HepG2 (cell line): ENCODE measurements at regions of chr6 and their contacts with region 1.

Region 1: DNA sequence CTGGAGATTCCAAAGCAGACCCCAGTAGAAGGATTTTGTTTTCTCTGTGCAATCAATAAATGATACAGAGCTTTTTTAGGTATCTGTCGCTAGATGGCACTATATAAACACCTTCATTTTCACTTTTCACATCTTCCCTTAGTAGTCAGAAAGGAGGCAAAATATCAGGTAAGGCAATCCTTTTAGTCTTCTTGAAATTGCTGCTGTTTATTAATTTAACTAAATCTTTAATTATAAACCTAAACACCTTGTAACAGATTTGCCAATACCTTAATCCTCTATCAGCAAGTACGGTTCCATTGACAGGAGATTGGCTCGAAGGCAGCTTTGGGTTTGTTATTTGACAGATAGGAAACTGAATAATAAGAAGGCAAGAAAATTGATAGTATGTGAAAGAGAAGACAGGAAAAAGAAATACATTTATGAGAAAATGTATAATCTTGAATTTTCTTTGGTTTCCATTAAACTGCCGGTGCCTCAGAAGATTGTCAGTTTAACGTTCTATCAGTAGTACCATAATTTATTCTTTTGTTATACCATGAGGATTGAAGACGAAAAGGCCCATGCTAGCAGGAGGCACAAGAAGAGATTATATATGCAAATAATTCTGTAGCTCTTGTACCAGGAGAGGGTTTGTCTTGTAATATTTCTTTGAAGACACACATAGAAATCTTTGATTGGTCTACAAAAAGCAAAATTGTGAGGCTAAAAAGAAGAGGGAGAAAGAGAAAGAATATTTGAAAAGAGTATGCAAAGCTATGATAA is 23.5 kb upstream of the IBTK start:
- DNase-seq: peak; percentile 30
- ATAC-seq: no peak; the same call in 2 of the 3 replicates
- H3K4me3 ChIP-seq: no peak overlapping the region
- H3K27ac ChIP-seq: no peak overlapping the region
- H3K4me1 ChIP-seq: no peaks in the 10 kb centered on the region
- H3K27me3 ChIP-seq: peaks cover 0 to 6% of the 10 kb centered on the region in 2 experiments; a peak in 1 of 5 replicates
- CTCF ChIP-seq: peak; percentile 62
- EP300 ChIP-seq: no peak
- POLR2A ChIP-seq: no peak
- RAD21 ChIP-seq: no peak

Region 2: GRCh38 chr6:82113231-82113630 is 157.8 kb before region 1 on chr6:
- CTCF ChIA-PET with region 1: no interaction called
- POLR2A ChIA-PET with region 1: no interaction called
- in situ Hi-C with region 1: no loop called
- intact Hi-C with region 1: no loop called
- DNase-seq: no peak
- ATAC-seq: no peak
- H3K4me3 ChIP-seq: no peak overlapping the region
- H3K27ac ChIP-seq: no peak overlapping the region
- H3K4me1 ChIP-seq: peaks cover 30% of the 10 kb centered on the region
- H3K27me3 ChIP-seq: no peaks in the 10 kb centered on the region
- CTCF ChIP-seq: no peak
- EP300 ChIP-seq: no peak
- POLR2A ChIP-seq: no peak
- RAD21 ChIP-seq: no peak

Region 3: DNA sequence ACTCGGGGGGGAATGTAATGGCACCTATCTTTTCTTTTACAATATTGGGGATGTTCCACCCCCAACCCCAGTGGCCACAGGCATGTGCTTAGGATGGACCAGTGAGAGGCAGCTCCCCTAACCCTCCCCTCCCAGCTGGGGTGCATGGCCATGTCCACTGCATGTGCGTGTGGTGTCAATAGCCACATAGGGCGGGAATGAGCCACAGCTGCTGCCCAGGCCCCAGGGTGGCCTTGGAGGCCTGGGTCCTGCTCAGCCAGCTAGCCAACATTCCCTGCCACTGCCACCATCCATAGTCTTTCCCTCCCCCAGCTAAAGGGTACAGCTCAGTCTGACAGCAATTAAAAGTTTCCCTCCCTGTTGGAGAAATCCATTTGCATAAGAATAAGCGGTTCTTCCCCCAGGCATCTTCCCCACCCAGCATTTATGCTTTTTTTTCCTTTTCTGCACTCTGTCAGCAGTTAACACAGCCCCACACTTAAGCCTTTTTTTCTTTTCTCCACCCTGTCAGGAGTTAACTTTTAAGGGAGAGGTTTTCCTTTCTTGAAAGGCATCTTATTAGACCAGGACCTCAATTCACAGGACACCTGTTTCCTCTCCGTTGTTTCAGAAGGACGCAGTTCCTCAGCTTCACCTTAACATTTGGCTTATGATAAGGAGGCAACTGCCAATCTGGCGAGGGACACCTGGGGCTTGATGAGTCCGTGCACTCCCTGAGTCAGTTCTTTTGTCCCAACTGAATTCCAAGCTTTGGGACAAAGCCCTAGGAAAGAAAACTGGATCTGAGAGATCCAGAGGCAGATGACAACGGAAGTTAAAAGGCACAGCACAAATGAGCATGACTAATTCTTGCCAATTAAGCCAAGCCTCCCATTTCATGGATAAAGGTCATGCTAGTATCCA is 213.9 kb after region 1 on chr6:
- CTCF ChIA-PET with region 1: interaction called, 3 read pairs
- POLR2A ChIA-PET with region 1: no interaction called
- in situ Hi-C with region 1: loop called (anchors 10 kb)
- intact Hi-C with region 1: loop called (anchors 2 kb)
- DNase-seq: no peak
- ATAC-seq: no peak
- H3K4me3 ChIP-seq: no peak overlapping the region
- H3K27ac ChIP-seq: no peak overlapping the region
- H3K4me1 ChIP-seq: no peaks in the 10 kb centered on the region
- H3K27me3 ChIP-seq: no peaks in the 10 kb centered on the region
- CTCF ChIP-seq: no peak
- EP300 ChIP-seq: no peak
- POLR2A ChIP-seq: no peak
- RAD21 ChIP-seq: no peak

Region 4: DNA sequence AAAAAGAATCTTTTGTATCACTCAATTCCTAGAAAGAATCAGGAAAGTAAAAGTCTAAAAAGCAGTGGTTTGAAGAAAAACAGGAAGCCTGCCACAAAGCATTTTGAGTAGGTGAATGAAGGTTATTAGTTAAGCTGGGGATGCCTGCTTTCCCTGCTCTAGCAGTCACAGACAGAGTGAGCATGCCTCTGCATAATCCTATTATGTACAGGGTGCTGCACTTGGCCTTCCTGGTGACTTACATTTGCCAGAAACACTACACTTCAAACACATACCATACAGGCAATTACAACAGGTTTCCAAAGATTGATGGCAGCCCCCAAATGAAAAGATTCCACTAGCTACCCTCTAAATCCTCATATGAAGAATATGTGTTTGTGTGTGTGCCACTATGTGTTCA is 223.3 kb after region 1 on chr6:
- CTCF ChIA-PET with region 1: interaction called, 3 read pairs
- POLR2A ChIA-PET with region 1: no interaction called
- in situ Hi-C with region 1: loop called (anchors 10 kb)
- intact Hi-C with region 1: loop called (anchors 2 kb)
- DNase-seq: no peak
- ATAC-seq: no peak
- H3K4me3 ChIP-seq: no peak overlapping the region
- H3K27ac ChIP-seq: no peak overlapping the region
- H3K4me1 ChIP-seq: no peaks in the 10 kb centered on the region
- H3K27me3 ChIP-seq: no peaks in the 10 kb centered on the region
- CTCF ChIP-seq: no peak
- EP300 ChIP-seq: no peak
- POLR2A ChIP-seq: no peak
- RAD21 ChIP-seq: no peak

Region 5: GRCh38 chr6:82712852-82713251 is 441.8 kb after region 1 on chr6:
- CTCF ChIA-PET with region 1: no interaction called
- POLR2A ChIA-PET with region 1: no interaction called
- in situ Hi-C with region 1: no loop called
- intact Hi-C with region 1: loop called (anchors 5 kb)
- DNase-seq: no peak
- ATAC-seq: no peak
- H3K4me3 ChIP-seq: no peak overlapping the region
- H3K27ac ChIP-seq: no peak overlapping the region
- H3K4me1 ChIP-seq: no peaks in the 10 kb centered on the region
- H3K27me3 ChIP-seq: no peaks in the 10 kb centered on the region
- CTCF ChIP-seq: peak; percentile 37; the same call in 1 of the 2 replicates
- EP300 ChIP-seq: no peak
- POLR2A ChIP-seq: no peak
- RAD21 ChIP-seq: no peak

Region 6: DNA sequence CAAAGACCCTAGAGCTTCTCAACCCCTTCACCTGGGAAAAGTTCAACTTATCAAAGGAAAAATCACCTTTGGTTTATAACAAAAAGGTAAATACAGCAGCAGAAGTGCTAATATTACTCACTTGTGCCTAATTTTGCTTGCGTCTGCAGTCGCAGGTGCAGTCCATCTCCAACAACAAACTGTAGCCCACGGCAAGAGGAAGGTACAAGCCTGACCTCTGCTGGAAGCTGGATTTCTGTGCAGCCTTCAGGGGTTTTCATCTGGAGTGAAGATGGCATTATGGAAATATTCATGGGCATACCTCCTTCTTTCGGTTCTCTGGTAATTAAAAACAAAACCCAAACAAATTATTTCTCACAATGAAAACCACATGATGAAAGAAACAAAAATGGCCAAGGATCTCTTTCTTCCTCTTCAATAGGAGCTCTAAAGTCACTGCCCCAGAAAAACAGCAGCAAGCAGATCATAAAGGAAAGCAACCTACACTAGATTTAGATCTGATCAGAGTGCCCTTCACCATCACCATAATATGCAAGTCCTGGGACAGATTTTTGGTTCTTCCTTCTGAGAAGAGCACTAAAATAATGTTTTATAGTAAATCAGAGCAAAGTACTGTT is 786.8 kb after region 1 on chr6:
- CTCF ChIA-PET with region 1: interaction called, 20 read pairs
- POLR2A ChIA-PET with region 1: no interaction called
- in situ Hi-C with region 1: loop called (anchors 5 kb)
- intact Hi-C with region 1: loop called (anchors 1 kb)
- DNase-seq: peak; percentile 42
- ATAC-seq: peak; percentile 90
- H3K4me3 ChIP-seq: no peak overlapping the region
- H3K27ac ChIP-seq: no peak overlapping the region
- H3K4me1 ChIP-seq: no peaks in the 10 kb centered on the region
- H3K27me3 ChIP-seq: no peaks in the 10 kb centered on the region
- CTCF ChIP-seq: peak; percentile 76
- EP300 ChIP-seq: no peak
- POLR2A ChIP-seq: no peak
- RAD21 ChIP-seq: peak; percentile 37; the same call in 1 of the 2 replicates